ENCODE measurements at regions of chr11 and their contacts with region 1.

Region 1: GRCh38 chr11:74726547-74727182 is 4.6 kb downstream of the CHRDL2 start:
- DNase-seq: no peak
- H3K4me3 ChIP-seq: no peak overlapping the region
- CTCF ChIP-seq: peak; percentile 98

Region 2: GRCh38 chr11:74592441-74593362 is 134.0 kb before region 1 on chr11 and contains the start of gene POLD3:
- CTCF ChIA-PET with region 1: interaction called, 10 read pairs
- POLR2A ChIA-PET with region 1: no interaction called
- DNase-seq: peak; percentile 26
- H3K4me3 ChIP-seq: peak within 1 kb of the TSS; percentile 81
- CTCF ChIP-seq: no peak

Region 3: GRCh38 chr11:74611369-74611861 is 115.2 kb before region 1 on chr11:
- CTCF ChIA-PET with region 1: interaction called, 116 read pairs
- POLR2A ChIA-PET with region 1: no interaction called
- DNase-seq: peak; percentile 64
- H3K4me3 ChIP-seq: no peak overlapping the region
- CTCF ChIP-seq: peak; percentile 38

Region 4: GRCh38 chr11:74634537-74634936 is 92.1 kb before region 1 on chr11:
- CTCF ChIA-PET with region 1: interaction called, 74 read pairs
- POLR2A ChIA-PET with region 1: no interaction called
- DNase-seq: no peak
- H3K4me3 ChIP-seq: no peak overlapping the region
- CTCF ChIP-seq: peak; percentile 32

Region 5: DNA sequence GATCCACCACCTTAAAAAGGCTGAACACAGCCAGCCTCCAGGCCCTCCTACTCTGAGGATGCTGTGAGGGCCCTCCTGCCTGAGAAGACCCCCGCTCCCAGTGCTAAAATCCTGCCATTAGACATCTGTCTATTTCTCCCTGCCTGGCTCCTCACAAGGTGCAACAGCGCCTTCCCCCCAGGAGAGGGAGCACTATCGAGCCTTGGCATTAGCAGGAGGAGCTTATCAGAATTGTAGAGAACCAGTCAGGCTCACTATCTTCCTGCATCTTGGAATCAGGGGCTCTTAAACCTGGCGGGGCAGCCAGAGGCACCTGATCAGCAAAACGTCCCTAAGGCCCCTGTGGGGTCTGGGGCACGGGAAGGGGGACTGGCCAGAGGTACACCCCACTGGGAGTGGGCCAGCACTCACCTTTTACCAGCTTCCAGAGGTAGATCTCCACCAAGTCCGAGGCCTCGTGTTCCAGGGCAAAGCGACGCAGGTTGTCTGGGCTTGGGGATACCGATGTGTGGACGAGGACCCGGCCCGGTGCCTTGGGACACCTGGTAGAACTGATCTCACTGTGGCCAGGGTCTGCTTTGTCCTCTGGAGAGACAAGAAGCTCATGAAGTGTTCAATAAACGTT is 24.2 kb before region 1 on chr11:
- CTCF ChIA-PET with region 1: interaction called, 305 read pairs
- POLR2A ChIA-PET with region 1: no interaction called
- DNase-seq: no peak
- H3K4me3 ChIP-seq: no peak overlapping the region
- CTCF ChIP-seq: peak; percentile 98

Region 6: GRCh38 chr11:74739546-74740270 is 13.0 kb after region 1 on chr11:
- CTCF ChIA-PET with region 1: interaction called, 122 read pairs
- POLR2A ChIA-PET with region 1: no interaction called
- DNase-seq: no peak
- H3K4me3 ChIP-seq: no peak overlapping the region
- CTCF ChIP-seq: peak; percentile 78

Region 7: DNA sequence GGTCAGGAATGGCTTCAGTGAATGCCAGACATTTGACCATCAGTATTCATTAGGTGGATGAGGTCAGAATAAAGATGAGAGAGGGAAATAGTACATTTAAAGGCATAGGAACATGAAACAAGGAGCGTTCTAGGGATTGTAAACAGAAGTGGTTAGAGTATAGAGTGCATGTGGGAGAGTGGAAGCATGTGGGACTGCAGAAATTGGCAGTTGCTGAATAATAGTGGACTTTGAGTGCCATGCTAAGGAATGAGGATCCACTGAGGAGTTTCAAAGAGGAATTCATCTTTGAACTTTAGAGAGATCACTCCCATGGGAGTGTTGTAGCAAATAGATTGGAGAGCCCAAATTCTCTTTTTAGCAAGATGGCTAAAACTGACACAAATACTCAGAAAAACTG is 29.9 kb after region 1 on chr11:
- CTCF ChIA-PET with region 1: no interaction called
- POLR2A ChIA-PET with region 1: no interaction called
- DNase-seq: no peak
- H3K4me3 ChIP-seq: no peak overlapping the region
- CTCF ChIP-seq: no peak